Upper lobe of right lung (tissue), 1 donor: ENCODE measurements at regions of chr20 and their contacts with region 1.

Region 1: GRCh38 chr20:33450867-33451266 is 7.3 kb upstream of the SNTA1 start:
- DNase-seq: no peak
- ATAC-seq: no peak
- H3K4me3 ChIP-seq: no peak overlapping the region
- H3K27ac ChIP-seq: no peak overlapping the region
- H3K4me1 ChIP-seq: no peaks in the 10 kb centered on the region
- H3K27me3 ChIP-seq: no peaks in the 10 kb centered on the region
- CTCF ChIP-seq: no peak

Region 2: DNA sequence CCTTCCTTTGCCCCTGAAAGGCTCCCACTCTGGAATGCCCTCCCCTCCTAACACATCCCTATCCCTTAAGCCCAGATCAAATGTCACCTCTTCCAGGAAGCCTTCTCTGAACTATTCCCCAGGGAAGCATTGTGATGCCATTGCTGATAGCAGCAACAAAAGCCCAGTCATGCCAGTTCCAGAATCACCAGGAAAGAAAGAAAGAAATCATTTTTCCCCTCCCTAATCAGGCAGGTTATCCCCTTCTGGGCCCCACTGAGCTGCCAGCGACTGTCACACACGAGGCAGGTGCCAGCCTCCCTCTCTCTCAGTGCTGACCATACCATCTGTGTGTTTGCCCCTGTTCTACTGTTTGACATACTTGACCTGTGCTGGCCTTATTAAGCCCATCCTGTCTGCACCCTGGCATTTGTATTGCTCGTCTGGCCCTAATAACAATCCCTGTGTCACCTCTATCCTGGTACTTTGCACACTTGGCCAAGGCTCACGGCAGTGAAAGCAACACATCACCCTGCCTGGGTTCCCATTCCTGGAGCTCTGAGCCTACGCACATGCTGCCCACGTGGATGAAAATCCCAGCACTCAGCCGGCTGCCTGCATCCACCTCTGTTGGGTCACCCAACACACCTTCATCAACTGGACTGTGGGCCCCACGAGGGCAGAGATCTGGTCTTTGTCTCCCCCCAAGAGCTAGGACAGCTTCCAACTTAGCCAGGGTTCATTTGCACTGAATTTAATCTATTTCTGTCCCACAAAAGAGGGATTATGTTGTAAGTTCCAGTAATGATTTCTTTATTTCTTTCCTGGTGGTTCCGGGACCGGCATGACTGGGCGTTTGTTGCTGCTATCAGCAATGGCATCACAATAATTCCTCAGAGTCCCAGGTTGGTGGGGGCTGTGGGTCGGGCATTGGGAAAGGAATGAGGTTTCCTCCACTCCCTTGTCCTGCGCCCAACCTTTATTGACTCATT is 173.1 kb before region 1 on chr20:
- intact Hi-C with region 1: no loop called
- DNase-seq: no peak
- ATAC-seq: no peak
- H3K4me3 ChIP-seq: no peak overlapping the region
- H3K27ac ChIP-seq: no peak overlapping the region
- H3K4me1 ChIP-seq: no peaks in the 10 kb centered on the region
- H3K27me3 ChIP-seq: peaks cover 5% of the 10 kb centered on the region
- CTCF ChIP-seq: no peak

Region 3: GRCh38 chr20:33653218-33653899 is 202.5 kb after region 1 on chr20:
- intact Hi-C with region 1: loop called (anchors 10 kb)
- DNase-seq: peak; percentile 67
- ATAC-seq: peak; percentile 61
- H3K4me3 ChIP-seq: no peak overlapping the region
- H3K27ac ChIP-seq: no peak overlapping the region
- H3K4me1 ChIP-seq: no peaks in the 10 kb centered on the region
- H3K27me3 ChIP-seq: no peaks in the 10 kb centered on the region
- CTCF ChIP-seq: peak; percentile 68